Esophagus squamous epithelium (tissue), 5 donors: ENCODE measurements at regions of chr22 and their contacts with region 1.

Region 1: DNA sequence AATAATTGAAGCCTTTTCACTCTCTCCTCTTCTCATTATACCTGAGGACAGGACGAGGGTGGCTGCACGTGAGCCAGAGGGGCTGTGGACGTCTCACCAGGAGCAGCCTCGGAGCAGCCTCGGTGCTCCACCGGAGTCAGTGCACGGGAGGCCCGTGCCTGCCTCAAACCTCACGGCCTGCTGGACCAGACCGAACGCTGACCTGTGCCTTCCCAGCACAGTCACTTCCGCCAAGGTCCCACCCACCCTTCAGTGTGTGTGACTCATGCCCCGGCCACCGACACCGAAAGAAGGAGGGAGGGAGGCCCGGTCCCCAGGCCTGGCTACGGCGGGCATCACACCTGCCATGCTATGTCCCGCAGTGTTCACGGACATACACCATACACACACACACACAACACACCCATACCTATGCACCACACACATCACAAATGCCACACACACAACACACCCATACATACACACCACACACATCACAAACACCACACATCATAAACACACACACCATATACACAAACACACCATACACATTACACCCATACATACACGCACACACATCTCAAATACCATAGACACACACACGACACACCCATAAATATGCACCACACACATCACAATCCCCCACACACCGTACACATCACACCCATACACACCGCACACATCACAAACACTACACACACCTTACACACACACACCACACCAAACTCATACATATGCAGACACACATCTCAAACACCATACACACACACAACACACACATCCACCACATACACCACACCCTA is 1506.5 kb downstream of the TBC1D22A start:
- DNase-seq: no peak
- H3K4me3 ChIP-seq: no peak overlapping the region
- H3K27ac ChIP-seq: no peak overlapping the region
- H3K4me1 ChIP-seq: no peaks in the 10 kb centered on the region
- H3K27me3 ChIP-seq: peaks cover 0 to 32% (median 0%) of the 10 kb centered on the region in 4 donors
- CTCF ChIP-seq: no peak
- POLR2A ChIP-seq: no peak

Region 2: DNA sequence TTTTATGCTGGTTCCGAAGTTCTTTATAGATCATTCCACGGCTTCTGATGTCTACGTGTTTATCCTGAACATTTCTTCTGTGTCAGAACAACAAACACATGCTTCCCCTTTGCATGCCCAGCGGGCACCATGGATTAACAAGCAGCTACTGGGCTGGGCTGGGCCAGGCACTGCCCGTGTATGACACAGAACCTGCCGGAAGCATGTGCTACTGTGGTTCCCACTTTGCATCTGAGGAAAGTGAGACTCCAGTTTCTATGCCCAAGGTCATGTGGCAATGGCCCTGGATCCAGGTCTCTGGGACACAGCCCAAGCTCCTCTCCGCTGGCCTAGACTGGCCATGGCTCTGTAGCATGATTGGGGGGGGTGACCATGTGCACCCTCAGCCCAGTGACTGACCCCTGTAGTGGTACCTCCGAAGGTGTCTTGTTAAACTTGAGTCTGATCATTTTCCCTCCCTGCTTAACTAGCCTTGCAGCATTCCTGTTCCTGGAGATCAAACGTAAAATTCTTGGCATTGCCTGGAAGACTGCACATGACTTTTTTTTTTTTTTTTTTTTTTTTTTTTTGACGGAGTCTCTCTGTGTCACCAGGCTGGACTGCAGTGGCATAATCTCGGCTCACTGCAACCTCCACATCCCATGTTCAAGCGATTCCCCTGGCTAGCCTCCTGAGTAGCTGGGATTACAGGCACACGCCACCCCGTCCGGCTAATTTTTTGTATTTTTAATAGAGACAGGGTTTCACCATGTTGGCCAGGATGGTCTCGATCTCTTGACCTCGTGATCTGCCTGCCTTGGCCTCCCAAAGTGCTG is 390.5 kb before region 1 on chr22:
- intact Hi-C with region 1: loop called (anchors 10 kb)
- DNase-seq: no peak
- H3K4me3 ChIP-seq: no peak overlapping the region
- H3K27ac ChIP-seq: no peak overlapping the region
- H3K4me1 ChIP-seq: no peaks in the 10 kb centered on the region
- H3K27me3 ChIP-seq: peaks cover 0 to 29% (median 0%) of the 10 kb centered on the region in 4 donors
- CTCF ChIP-seq: no peak
- POLR2A ChIP-seq: no peak